Right ventricle myocardium inferior (tissue), 1 donor: ENCODE measurements at regions of chr11 and their contacts with region 1.

Region 1: GRCh38 chr11:57815476-57815875 is 53.9 kb downstream of the CTNND1 start:
- DNase-seq: no peak
- ATAC-seq: no peak

Region 2: GRCh38 chr11:57324886-57325734 is 490.4 kb before region 1 on chr11 and contains the start of gene TNKS1BP1:
- intact Hi-C with region 1: no loop called
- DNase-seq: peak; percentile 99
- ATAC-seq: peak; percentile 87
- total RNA-seq, gene TNKS1BP1: 51.2 TPM

Region 3: GRCh38 chr11:57680552-57680874 is 135.0 kb before region 1 on chr11:
- intact Hi-C with region 1: loop called (anchors 10 kb)
- DNase-seq: no peak
- ATAC-seq: no peak

Region 4: DNA sequence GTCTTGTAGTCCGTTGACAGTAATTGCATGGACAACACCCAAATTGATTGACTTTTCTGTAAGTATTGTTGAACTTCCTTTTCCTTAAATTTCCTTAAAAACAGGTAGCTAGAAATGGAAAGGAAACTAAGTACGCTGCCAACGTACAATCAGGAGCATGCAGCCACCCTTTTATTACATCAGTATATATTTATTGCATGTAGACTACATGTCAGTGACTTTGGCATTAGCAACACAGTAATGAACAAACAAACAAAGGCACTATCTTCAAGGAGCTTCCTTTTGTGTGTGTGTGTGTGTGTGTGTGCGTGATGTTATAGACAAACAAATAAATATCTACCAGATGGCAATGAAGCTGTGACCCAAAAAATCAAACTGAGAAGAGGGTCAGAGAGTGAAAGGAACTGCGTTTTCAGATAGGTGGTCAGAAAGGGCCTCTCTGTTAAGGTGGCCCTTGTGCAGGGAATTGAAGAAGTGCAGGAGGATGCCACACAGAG is 208.0 kb after region 1 on chr11 and contains the start of gene OR9Q1:
- intact Hi-C with region 1: no loop called
- DNase-seq: no peak
- ATAC-seq: no peak
- total RNA-seq, gene OR9Q1: not detected